OCI-LY7 (cell line): ENCODE measurements at regions of chr3 and their contacts with region 1.

Region 1: GRCh38 chr3:55721716-55722484 is 234.8 kb upstream of the WNT5A start:
- DNase-seq: peak; percentile 83
- H3K4me3 ChIP-seq: peak overlapping the region; percentile 2
- H3K27ac ChIP-seq: peak overlapping the region; percentile 94
- H3K4me1 ChIP-seq: peaks cover 95% of the 10 kb centered on the region
- CTCF ChIP-seq: peak; percentile 78

Region 2: DNA sequence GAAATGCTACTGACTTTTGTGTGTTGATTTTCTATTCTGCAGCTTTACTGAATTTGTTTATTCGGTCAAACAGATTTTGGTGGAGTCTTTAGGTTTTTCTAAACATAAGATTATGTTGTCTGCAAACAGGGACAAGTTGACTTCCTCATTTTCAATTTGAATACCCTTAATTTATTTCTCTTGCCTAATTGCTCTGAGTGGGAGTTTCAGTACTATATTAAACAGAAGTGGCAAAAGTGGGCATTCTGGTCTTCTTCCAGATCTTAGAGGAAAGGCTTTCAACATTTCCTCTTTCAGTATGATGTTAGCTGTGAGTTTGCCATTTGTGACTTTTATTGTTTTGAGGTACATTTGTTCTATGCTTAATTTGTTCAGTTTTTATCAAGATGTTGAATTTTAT is 503.3 kb before region 1 on chr3:
- CTCF ChIA-PET with region 1: no interaction called
- POLR2A ChIA-PET with region 1: no interaction called
- intact Hi-C with region 1: loop called (anchors 5 kb)
- DNase-seq: peak; percentile 18
- H3K4me3 ChIP-seq: no peak overlapping the region
- H3K27ac ChIP-seq: peak overlapping the region; percentile 94
- H3K4me1 ChIP-seq: peaks cover 54% of the 10 kb centered on the region
- CTCF ChIP-seq: no peak

Region 3: DNA sequence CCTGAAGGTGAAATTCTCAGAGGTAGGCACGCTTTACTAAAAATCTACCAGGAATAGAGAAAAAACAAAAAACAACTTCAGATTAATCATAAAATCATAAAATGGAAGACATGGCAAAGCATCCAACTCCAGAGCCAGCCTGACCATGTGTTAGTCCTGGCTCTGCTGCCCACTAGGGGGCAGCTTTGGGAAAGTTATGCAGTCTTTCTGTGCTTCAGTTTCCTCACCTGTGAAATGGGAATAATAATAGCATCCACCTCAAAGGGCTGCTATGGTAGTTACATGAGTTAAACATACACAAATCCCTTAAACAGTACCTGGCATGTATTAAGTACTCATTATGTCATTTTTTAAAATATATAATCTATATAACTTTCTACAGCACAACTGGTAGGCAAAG is 287.1 kb before region 1 on chr3:
- CTCF ChIA-PET with region 1: no interaction called
- POLR2A ChIA-PET with region 1: no interaction called
- intact Hi-C with region 1: loop called (anchors 1 kb)
- DNase-seq: peak; percentile 71
- H3K4me3 ChIP-seq: no peak overlapping the region
- H3K27ac ChIP-seq: no peak overlapping the region
- H3K4me1 ChIP-seq: no peaks in the 10 kb centered on the region
- CTCF ChIP-seq: peak; percentile 95

Region 4: DNA sequence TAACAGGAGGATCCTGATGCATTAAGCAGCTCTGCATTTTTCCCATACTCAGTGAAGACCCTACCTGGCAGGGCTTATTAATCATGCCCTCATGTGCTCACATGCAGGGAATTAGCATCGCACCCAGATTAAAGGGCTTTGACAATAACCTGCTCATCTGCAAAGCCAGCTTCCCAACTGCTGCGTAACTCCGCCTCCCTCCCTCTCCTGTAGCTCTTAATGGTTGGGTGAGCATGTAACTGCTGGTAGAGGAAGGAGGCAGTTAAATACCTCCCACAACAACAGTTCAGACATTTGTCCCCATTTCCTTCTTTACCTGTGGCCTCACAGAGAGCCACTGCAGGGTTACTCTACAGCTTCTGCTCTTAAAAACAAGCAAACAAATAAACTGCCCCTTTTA is 31.2 kb before region 1 on chr3:
- CTCF ChIA-PET with region 1: interaction called, 3 read pairs
- POLR2A ChIA-PET with region 1: interaction called, 21 read pairs
- intact Hi-C with region 1: loop called (anchors 2 kb)
- DNase-seq: peak; percentile 87
- H3K4me3 ChIP-seq: peak overlapping the region; percentile 37
- H3K27ac ChIP-seq: peak overlapping the region; percentile 80
- H3K4me1 ChIP-seq: peaks cover 71% of the 10 kb centered on the region
- CTCF ChIP-seq: no peak

Region 5: GRCh38 chr3:55755516-55756205 is 33.8 kb after region 1 on chr3:
- CTCF ChIA-PET with region 1: no interaction called
- POLR2A ChIA-PET with region 1: interaction called, 9 read pairs
- intact Hi-C with region 1: loop called (anchors 2 kb)
- DNase-seq: no peak
- H3K4me3 ChIP-seq: no peak overlapping the region
- H3K27ac ChIP-seq: no peak overlapping the region
- H3K4me1 ChIP-seq: peaks cover 30% of the 10 kb centered on the region
- CTCF ChIP-seq: no peak